ENCODE measurements at regions of chr20 and their contacts with region 1.

Region 1: GRCh38 chr20:2651772-2652723 is at the start of gene NOP56:
- DNase-seq: peak; percentile 91 to 95
- ATAC-seq: peak; percentile 96 to 99 (median 98)
- H3K4me3 ChIP-seq: peak within 1 kb of the TSS; percentile 69 to 98 (median 93)
- H3K27ac ChIP-seq: peak within 1 kb of the TSS; percentile 67 to 97 (median 94)
- H3K4me1 ChIP-seq: peaks cover 3 to 33% (median 25%) of the 10 kb centered on the region in 9 donors
- H3K27me3 ChIP-seq: no peaks in the 10 kb centered on the region
- CTCF ChIP-seq: peak in 1 of 9 donors; percentile 4
- total RNA-seq, gene NOP56: 37.1 to 77.1 (median 46.7) TPM

Region 2: DNA sequence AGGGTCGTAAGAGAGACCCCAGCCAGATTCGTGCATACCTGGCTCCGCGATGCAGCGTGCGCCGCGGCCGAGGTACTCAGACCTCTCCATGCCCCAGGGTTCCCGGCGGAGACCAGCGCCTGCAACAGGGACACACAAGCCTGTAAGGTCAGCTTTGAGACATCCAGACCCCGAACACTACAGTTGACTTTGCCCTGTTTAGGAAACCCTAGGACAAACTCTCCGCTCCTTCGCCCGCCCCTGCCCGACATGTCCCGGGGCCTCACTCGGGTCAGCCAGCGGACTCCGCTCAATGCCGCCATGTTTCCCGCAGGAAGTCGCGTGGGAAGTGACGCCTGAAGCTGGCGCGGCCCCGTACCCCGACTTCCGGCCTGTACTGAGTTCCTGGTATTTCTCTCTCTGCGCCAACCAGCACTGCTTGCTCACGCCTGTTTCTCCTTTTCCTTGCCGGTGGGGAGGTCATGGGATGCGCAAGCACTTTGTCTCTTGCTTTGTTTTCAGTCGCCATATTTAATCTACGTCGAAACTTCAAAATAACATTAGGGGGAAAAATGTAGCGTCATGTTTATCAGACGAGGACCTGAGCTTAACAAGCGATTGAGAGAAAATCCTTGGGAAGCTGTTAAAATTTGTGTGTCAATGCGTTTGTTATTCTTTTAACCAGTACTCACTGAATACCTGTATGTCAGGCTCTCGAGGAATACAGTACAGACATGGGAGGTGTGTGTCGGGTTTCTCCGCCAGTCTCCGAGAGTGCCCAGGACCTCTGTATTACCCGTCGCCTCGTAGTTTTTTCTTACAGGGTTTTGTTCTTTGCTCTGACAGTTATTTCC is 12.1 kb after region 1 on chr20 and contains the start of gene IDH3B:
- intact Hi-C with region 1: loop called in 1 of 10 experiments (anchors 1 kb)
- DNase-seq: peak; percentile 91 to 95
- ATAC-seq: peak; percentile 97 to 99 (median 99)
- H3K4me3 ChIP-seq: peak within 1 kb of the TSS; percentile 71 to 94 (median 82)
- H3K27ac ChIP-seq: peak within 1 kb of the TSS; percentile 55 to 98 (median 90)
- H3K4me1 ChIP-seq: peaks cover 0 to 23% (median 14%) of the 10 kb centered on the region in 9 donors
- H3K27me3 ChIP-seq: no peaks in the 10 kb centered on the region
- CTCF ChIP-seq: no peak
- total RNA-seq, gene IDH3B: 135 to 264 (median 224) TPM

Region 3: DNA sequence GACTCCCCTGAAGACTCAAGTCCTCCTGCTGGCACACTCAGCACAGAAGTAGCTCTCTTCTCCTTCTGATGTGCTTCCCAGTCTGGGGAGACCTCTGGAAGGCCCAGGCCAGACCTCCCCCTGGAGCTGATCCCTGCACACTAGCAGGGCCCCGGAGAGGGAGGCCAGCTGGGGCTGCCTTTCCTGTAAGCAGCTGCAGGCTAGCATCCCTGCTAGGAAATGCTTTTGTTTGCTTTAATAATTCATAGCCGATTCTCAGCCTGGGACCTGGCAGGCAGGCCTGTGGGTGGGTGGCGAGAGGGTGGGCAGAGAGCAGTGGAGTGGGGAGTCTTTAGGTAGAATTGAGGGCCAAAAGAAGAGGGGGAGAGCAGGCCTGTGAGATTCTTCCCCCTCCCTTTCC is 45.7 kb after region 1 on chr20:
- intact Hi-C with region 1: no loop called
- DNase-seq: no peak
- ATAC-seq: no peak
- H3K4me3 ChIP-seq: no peak overlapping the region
- H3K27ac ChIP-seq: no peak overlapping the region
- H3K4me1 ChIP-seq: peaks cover 0 to 12% (median 4%) of the 10 kb centered on the region in 9 donors
- H3K27me3 ChIP-seq: peaks cover 0 to 37% (median 14%) of the 10 kb centered on the region in 7 donors
- CTCF ChIP-seq: no peak